ENCODE measurements at regions of chr9 and their contacts with region 1.

Region 1: DNA sequence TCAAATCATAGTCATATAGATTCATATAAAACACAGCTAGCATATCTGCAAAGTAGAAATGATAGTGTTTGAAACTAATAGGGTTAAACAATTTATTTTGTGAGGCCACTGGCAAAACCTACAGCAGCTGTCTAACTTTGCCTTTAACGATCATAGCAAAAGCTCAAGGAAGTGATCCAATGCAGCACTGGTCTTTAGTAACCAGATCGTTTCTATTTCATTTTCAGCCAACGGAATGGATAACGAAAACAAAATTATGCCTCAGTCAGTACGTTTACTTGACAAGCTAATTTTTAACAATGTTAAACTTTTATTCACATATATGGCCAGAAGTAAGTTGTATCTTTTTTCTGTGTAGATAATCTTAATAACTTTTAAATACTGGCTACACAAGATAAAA is 17.7 kb downstream of the MLLT3 start:
- DNase-seq: no peak
- ATAC-seq: peak; percentile 85
- H3K4me3 ChIP-seq: peak overlapping the region; percentile 45
- H3K27ac ChIP-seq: peak overlapping the region; percentile 67
- H3K4me1 ChIP-seq: peaks cover 19% of the 10 kb centered on the region
- H3K27me3 ChIP-seq: no peaks in the 10 kb centered on the region
- CTCF ChIP-seq: no peak
- EP300 ChIP-seq: no peak; a peak in 1 of 4 replicates
- POLR2A ChIP-seq: no peak
- RAD21 ChIP-seq: no peak

Region 2: DNA sequence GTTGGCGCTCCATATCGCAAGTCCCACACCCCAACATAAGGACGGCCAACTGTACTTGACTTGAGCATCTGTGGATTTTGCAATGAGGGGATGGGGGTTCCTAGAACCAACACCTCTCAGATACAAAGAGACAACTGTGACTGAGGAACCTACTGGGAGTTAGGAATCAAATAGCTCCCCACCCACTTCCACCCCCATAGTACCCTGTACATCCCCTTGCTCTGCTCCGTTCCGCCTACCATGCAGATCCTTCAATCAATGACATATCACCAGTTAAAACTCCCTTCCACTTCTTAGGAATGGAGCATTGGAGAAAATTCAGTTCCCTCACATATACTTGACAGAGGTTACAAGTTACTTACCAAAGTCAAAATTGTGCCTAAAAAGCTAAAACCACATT is 123.1 kb before region 1 on chr9:
- CTCF ChIA-PET with region 1: no interaction called
- POLR2A ChIA-PET with region 1: no interaction called
- RAD21 ChIA-PET with region 1: no interaction called
- SMC1A ChIA-PET with region 1: no interaction called
- in situ Hi-C with region 1: no loop called
- intact Hi-C with region 1: no loop called
- DNase-seq: no peak
- ATAC-seq: no peak
- H3K4me3 ChIP-seq: no peak overlapping the region
- H3K27ac ChIP-seq: peak overlapping the region; percentile 18; the same call in 1 of the 2 replicates
- H3K4me1 ChIP-seq: peaks cover 34% of the 10 kb centered on the region
- H3K27me3 ChIP-seq: no peaks in the 10 kb centered on the region
- CTCF ChIP-seq: no peak
- EP300 ChIP-seq: no peak
- POLR2A ChIP-seq: no peak
- RAD21 ChIP-seq: no peak

Region 3: GRCh38 chr9:20552874-20553575 is 51.5 kb before region 1 on chr9:
- CTCF ChIA-PET with region 1: interaction called, 7 read pairs
- POLR2A ChIA-PET with region 1: interaction called, 3 read pairs
- RAD21 ChIA-PET with region 1: interaction called, 17 read pairs
- SMC1A ChIA-PET with region 1: interaction called, 26 read pairs
- in situ Hi-C with region 1: no loop called
- intact Hi-C with region 1: loop called (anchors 2 kb)
- DNase-seq: peak; percentile 38
- ATAC-seq: peak; percentile 67
- H3K4me3 ChIP-seq: peak overlapping the region; percentile 8
- H3K27ac ChIP-seq: peak overlapping the region; percentile 66
- H3K4me1 ChIP-seq: peaks cover 36% of the 10 kb centered on the region
- H3K27me3 ChIP-seq: no peaks in the 10 kb centered on the region
- CTCF ChIP-seq: peak in 1 of 3 experiments; percentile 8; a peak in 2 of 6 replicates
- EP300 ChIP-seq: no peak
- POLR2A ChIP-seq: no peak
- RAD21 ChIP-seq: 0 out of 2 replicates have a peak, but pooled peaks have one; percentile 2

Region 4: GRCh38 chr9:20570756-20571155 is 33.8 kb before region 1 on chr9:
- CTCF ChIA-PET with region 1: no interaction called
- POLR2A ChIA-PET with region 1: interaction called, 8 read pairs
- RAD21 ChIA-PET with region 1: interaction called, 4 read pairs
- SMC1A ChIA-PET with region 1: interaction called, 10 read pairs
- in situ Hi-C with region 1: no loop called
- intact Hi-C with region 1: no loop called
- DNase-seq: no peak
- ATAC-seq: peak; percentile 82
- H3K4me3 ChIP-seq: no peak overlapping the region
- H3K27ac ChIP-seq: peak overlapping the region; percentile 15
- H3K4me1 ChIP-seq: peaks cover 16% of the 10 kb centered on the region
- H3K27me3 ChIP-seq: no peaks in the 10 kb centered on the region
- CTCF ChIP-seq: no peak
- EP300 ChIP-seq: no peak
- POLR2A ChIP-seq: no peak
- RAD21 ChIP-seq: no peak

Region 5: DNA sequence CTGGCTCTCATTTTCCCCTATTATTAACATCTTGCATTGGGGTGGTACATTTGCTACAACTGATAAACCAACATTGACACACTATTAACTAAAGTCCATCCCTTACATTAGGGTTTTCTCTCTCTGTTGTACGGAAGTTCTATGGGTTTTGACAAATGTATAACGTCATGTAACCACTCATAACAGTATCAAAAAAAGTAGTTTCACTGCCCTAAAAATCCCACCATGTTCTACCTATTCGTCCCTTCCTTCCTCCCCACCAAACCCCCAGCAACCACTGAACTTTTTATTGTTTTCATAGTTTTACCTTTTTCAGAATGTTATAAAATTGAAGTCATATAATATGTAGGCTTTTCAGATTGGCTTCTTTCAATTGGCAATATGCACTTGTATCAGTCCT is 22.4 kb before region 1 on chr9:
- CTCF ChIA-PET with region 1: interaction called, 3 read pairs
- POLR2A ChIA-PET with region 1: interaction called, 7 read pairs
- RAD21 ChIA-PET with region 1: interaction called, 11 read pairs
- SMC1A ChIA-PET with region 1: interaction called, 12 read pairs
- in situ Hi-C with region 1: no loop called
- intact Hi-C with region 1: no loop called
- DNase-seq: peak; percentile 37
- ATAC-seq: peak; percentile 87
- H3K4me3 ChIP-seq: no peak overlapping the region
- H3K27ac ChIP-seq: peak overlapping the region; percentile 46
- H3K4me1 ChIP-seq: peaks cover 16% of the 10 kb centered on the region
- H3K27me3 ChIP-seq: no peaks in the 10 kb centered on the region
- CTCF ChIP-seq: no peak
- EP300 ChIP-seq: peak; percentile 46 to 65; a peak in 2 of 4 replicates
- POLR2A ChIP-seq: no peak
- RAD21 ChIP-seq: no peak

Region 6: DNA sequence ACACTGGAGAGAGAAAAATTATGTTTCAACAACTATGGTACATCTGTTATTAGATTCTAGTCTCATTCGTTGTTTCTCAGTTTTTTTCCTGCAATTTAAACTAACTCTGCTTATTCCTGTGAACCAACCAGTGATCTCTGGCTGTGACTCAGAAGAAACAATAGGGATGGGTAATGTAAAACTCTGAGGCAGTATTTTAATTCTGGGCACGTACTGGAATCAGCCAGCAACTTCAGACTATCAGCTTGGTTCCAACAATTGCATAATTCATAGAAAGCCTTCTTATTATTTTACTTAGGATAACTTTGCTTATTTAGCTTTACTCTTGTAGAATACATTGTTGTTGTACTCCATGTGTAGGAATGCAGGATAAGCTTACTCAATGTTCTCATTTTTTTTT is 11.0 kb before region 1 on chr9:
- CTCF ChIA-PET with region 1: interaction called, 14 read pairs
- POLR2A ChIA-PET with region 1: interaction called, 7 read pairs
- RAD21 ChIA-PET with region 1: interaction called, 15 read pairs
- SMC1A ChIA-PET with region 1: interaction called, 35 read pairs
- in situ Hi-C with region 1: no loop called
- intact Hi-C with region 1: no loop called
- DNase-seq: no peak
- ATAC-seq: no peak
- H3K4me3 ChIP-seq: no peak overlapping the region
- H3K27ac ChIP-seq: no peak overlapping the region
- H3K4me1 ChIP-seq: peaks cover 9% of the 10 kb centered on the region
- H3K27me3 ChIP-seq: no peaks in the 10 kb centered on the region
- CTCF ChIP-seq: no peak
- EP300 ChIP-seq: no peak
- POLR2A ChIP-seq: no peak
- RAD21 ChIP-seq: no peak

Region 7: GRCh38 chr9:20640331-20641187 is 36.0 kb after region 1 on chr9:
- CTCF ChIA-PET with region 1: interaction called, 3 read pairs
- POLR2A ChIA-PET with region 1: interaction called, 3 read pairs
- RAD21 ChIA-PET with region 1: interaction called, 5 read pairs
- SMC1A ChIA-PET with region 1: interaction called, 11 read pairs
- in situ Hi-C with region 1: no loop called
- intact Hi-C with region 1: no loop called
- DNase-seq: peak; percentile 99
- ATAC-seq: peak; percentile 96
- H3K4me3 ChIP-seq: no peak overlapping the region
- H3K27ac ChIP-seq: peak overlapping the region; percentile 73
- H3K4me1 ChIP-seq: peaks cover 13% of the 10 kb centered on the region
- H3K27me3 ChIP-seq: no peaks in the 10 kb centered on the region
- CTCF ChIP-seq: no peak
- EP300 ChIP-seq: peak; percentile 67 to 90; a peak in 3 of 4 replicates
- POLR2A ChIP-seq: peak; percentile 46; the same call in 1 of the 2 replicates
- RAD21 ChIP-seq: peak; percentile 11; the same call in 1 of the 2 replicates